A549 (cell line): ENCODE measurements at regions of chr10 and their contacts with region 1.

Region 1: DNA sequence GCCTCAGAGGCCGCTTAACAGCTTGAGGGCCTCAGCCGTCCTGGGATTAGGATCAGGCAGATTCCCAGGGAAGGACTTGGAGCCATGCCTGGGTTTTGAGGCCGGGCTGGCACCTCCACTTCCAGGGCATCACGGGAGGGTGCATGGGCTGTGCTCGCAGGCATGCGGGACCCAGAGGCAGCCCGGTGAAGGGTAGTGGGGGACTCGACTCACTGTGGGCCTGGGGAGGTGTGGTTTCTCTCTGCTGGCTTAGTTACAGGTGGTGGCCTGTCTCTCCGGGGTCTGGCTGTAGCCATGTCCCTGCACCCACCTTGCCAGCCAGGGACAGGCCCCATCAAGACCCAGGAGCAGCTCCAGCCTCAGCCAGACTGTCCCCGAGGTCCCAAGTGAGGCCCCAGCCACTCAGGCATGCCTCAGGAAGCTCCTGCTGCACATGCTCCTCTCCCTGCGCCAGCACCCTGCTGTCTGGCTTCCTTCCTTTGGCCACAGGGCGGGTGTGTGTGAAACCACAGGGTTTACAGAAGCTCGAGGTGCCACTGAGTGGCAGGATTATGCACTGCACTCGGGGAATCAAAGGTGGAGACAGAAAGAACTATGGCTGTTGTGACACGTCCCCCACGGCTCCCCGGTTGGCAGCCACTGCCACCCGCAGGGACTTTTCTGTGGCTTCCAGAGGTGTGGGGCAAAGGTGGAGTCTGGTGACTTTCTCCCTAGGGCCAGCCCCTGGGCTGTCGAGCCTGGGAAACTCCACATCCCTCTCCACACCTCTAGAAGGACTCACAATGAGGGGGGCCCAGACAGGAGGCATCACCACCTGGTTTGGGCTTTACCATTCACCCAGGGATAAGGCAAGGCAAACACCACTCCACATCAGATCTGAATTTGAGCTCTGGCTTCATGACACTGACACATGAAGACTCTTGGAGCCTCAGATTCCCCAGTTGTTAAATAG is 19.7 kb downstream of the GOLGA7B start:
- DNase-seq: peak; percentile 89 to 98
- ATAC-seq: peak; percentile 97 to 99
- H3K4me3 ChIP-seq: no peak overlapping the region
- H3K27ac ChIP-seq: peak overlapping the region; percentile 77 to 89
- H3K4me1 ChIP-seq: peaks cover 12% of the 10 kb centered on the region
- CTCF ChIP-seq: peak; percentile 89
- EP300 ChIP-seq: no peak
- POLR2A ChIP-seq: peak; percentile 38; the same call in 1 of the 2 replicates
- RAD21 ChIP-seq: peak; percentile 98

Region 2: GRCh38 chr10:97736902-97737769 is 132.2 kb before region 1 on chr10 and contains the start of gene ZFYVE27:
- CTCF ChIA-PET with region 1: interaction called, 10 read pairs
- POLR2A ChIA-PET with region 1: no interaction called
- DNase-seq: peak; percentile 96 to 98
- ATAC-seq: peak; percentile 78 to 91
- H3K4me3 ChIP-seq: peak within 1 kb of the TSS; percentile 86
- H3K27ac ChIP-seq: peak within 1 kb of the TSS; percentile 86 to 98
- H3K4me1 ChIP-seq: peaks cover 9% of the 10 kb centered on the region; the same call in 2 of the 3 replicates
- CTCF ChIP-seq: no peak
- EP300 ChIP-seq: no peak
- POLR2A ChIP-seq: peak; percentile 91
- RAD21 ChIP-seq: no peak
- polyA plus RNA-seq, gene ZFYVE27: 17.1 and 20.2 TPM in 2 replicates

Region 3: DNA sequence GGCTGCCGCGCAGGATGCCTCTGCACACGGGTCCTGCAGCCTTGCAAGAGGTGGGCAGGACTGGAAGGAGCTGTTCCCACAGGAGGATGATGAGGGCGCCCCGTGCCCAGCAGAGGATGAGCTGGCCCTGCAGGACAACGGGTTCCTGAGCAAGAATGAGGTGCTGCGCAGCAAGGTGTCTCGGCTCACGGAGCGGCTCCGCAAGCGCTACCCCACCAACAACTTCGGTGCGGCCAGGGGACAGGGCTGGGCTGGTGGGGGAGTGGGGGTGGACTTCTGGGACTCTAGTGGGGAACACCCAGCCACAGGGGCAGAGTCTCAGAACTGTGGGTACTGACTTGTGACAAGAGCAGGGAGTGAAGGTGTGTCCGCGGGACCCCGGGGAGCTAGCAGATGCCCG is 116.4 kb before region 1 on chr10:
- CTCF ChIA-PET with region 1: interaction called, 18 read pairs
- POLR2A ChIA-PET with region 1: no interaction called
- DNase-seq: no peak
- ATAC-seq: no peak
- H3K4me3 ChIP-seq: no peak overlapping the region
- H3K27ac ChIP-seq: no peak overlapping the region
- H3K4me1 ChIP-seq: no peaks in the 10 kb centered on the region
- CTCF ChIP-seq: no peak
- EP300 ChIP-seq: no peak
- POLR2A ChIP-seq: no peak
- RAD21 ChIP-seq: no peak

Region 4: GRCh38 chr10:97771055-97771811 is 98.1 kb before region 1 on chr10:
- CTCF ChIA-PET with region 1: interaction called, 75 read pairs
- POLR2A ChIA-PET with region 1: no interaction called
- DNase-seq: peak; percentile 43 to 71
- ATAC-seq: peak; percentile 66 to 79
- H3K4me3 ChIP-seq: peak overlapping the region; percentile 50
- H3K27ac ChIP-seq: peak overlapping the region; percentile 19 to 70; a peak in 2 of 6 replicates
- H3K4me1 ChIP-seq: peaks cover 4% of the 10 kb centered on the region; the same call in 2 of the 3 replicates
- CTCF ChIP-seq: no peak; the same call in 2 of the 3 replicates
- EP300 ChIP-seq: no peak
- POLR2A ChIP-seq: no peak
- RAD21 ChIP-seq: peak; percentile 20 to 21; a peak in 1 of 5 replicates

Region 5: DNA sequence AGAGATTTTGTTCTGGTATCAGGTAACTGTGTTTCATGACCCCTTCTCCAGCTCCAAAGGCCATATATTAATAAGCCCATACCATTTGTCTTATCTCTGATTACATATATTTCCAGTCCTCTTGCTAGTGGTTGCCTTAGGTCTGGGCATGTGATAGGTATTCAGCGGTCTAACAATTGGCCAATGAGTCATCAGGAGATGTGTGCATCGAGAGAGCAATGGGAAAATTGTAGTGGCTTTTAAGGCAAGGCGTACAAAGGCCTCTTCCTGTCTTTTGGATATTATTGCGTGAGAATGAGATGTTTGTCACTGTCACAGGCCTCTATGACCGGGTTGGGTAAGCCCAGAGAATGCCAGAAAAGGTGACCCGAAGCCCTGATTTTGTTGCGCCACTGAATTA is 58.9 kb before region 1 on chr10:
- CTCF ChIA-PET with region 1: interaction called, 24 read pairs
- POLR2A ChIA-PET with region 1: no interaction called
- DNase-seq: no peak
- ATAC-seq: peak in 1 of 2 experiments; percentile 22; a peak in 1 of 6 replicates
- H3K4me3 ChIP-seq: no peak overlapping the region
- H3K27ac ChIP-seq: peak overlapping the region; percentile 12 to 89; a peak in 4 of 6 replicates
- H3K4me1 ChIP-seq: peaks cover 34% of the 10 kb centered on the region
- CTCF ChIP-seq: no peak
- EP300 ChIP-seq: no peak
- POLR2A ChIP-seq: no peak
- RAD21 ChIP-seq: no peak

Region 6: DNA sequence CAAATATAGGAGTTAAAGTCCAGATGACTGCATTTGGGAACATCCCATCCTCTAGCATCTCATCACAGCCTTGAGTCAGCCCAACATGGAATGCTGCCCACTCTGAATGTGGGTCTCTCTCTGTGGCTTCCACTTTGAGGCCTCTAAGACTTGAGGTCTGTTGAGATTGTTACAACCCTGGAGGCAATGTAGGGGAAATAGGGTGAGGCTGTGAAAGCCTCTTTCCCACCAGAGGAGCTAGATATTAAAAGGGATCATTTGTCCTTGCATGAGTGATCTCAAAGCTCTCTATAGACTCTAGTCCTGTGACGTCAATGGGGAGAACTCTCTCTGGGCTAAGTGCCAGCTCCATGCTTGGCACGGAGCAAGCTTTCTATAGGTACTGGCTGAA is 26.1 kb before region 1 on chr10:
- CTCF ChIA-PET with region 1: interaction called, 15 read pairs
- POLR2A ChIA-PET with region 1: interaction called, 6 read pairs
- DNase-seq: peak in 1 of 2 experiments; percentile 71
- ATAC-seq: peak; percentile 69 to 70
- H3K4me3 ChIP-seq: no peak overlapping the region
- H3K27ac ChIP-seq: peak overlapping the region; percentile 42 to 64; a peak in 5 of 6 replicates
- H3K4me1 ChIP-seq: peaks cover 32% of the 10 kb centered on the region
- CTCF ChIP-seq: no peak
- EP300 ChIP-seq: no peak
- POLR2A ChIP-seq: no peak
- RAD21 ChIP-seq: no peak

Region 7: GRCh38 chr10:97888641-97889262 is 19.4 kb after region 1 on chr10:
- CTCF ChIA-PET with region 1: interaction called, 134 read pairs
- POLR2A ChIA-PET with region 1: interaction called, 5 read pairs
- DNase-seq: peak; percentile 74 to 86
- ATAC-seq: peak; percentile 66 to 70
- H3K4me3 ChIP-seq: peak overlapping the region; percentile 25; the same call in 2 of the 3 replicates
- H3K27ac ChIP-seq: peak overlapping the region; percentile 95 to 97
- H3K4me1 ChIP-seq: peaks cover 43% of the 10 kb centered on the region
- CTCF ChIP-seq: peak; percentile 47
- EP300 ChIP-seq: peak in 1 of 2 experiments; percentile 27; a peak in 1 of 5 replicates
- POLR2A ChIP-seq: no peak
- RAD21 ChIP-seq: no peak